PC-9 (cell line): ENCODE measurements at regions of chr2 and their contacts with region 1.

Region 1: GRCh38 chr2:16773080-16773713 is 107.6 kb upstream of the CYRIA start:
- DNase-seq: peak; percentile 42 to 66
- H3K4me3 ChIP-seq: no peak overlapping the region
- H3K27ac ChIP-seq: no peak overlapping the region
- H3K4me1 ChIP-seq: peaks cover 38% of the 10 kb centered on the region
- H3K27me3 ChIP-seq: no peaks in the 10 kb centered on the region
- CTCF ChIP-seq: peak; percentile 88

Region 2: GRCh38 chr2:16911746-16912145 is 138.5 kb after region 1 on chr2:
- CTCF ChIA-PET with region 1: no interaction called
- POLR2A ChIA-PET with region 1: no interaction called
- intact Hi-C with region 1: loop called (anchors 1 kb)
- DNase-seq: no peak
- H3K4me3 ChIP-seq: no peak overlapping the region
- H3K27ac ChIP-seq: no peak overlapping the region
- H3K4me1 ChIP-seq: peaks cover 46% of the 10 kb centered on the region
- H3K27me3 ChIP-seq: no peaks in the 10 kb centered on the region
- CTCF ChIP-seq: no peak

Region 3: GRCh38 chr2:16978301-16978700 is 205.1 kb after region 1 on chr2:
- CTCF ChIA-PET with region 1: no interaction called
- POLR2A ChIA-PET with region 1: no interaction called
- intact Hi-C with region 1: loop called (anchors 10 kb)
- DNase-seq: no peak
- H3K4me3 ChIP-seq: no peak overlapping the region
- H3K27ac ChIP-seq: no peak overlapping the region
- H3K4me1 ChIP-seq: no peaks in the 10 kb centered on the region
- H3K27me3 ChIP-seq: no peaks in the 10 kb centered on the region
- CTCF ChIP-seq: no peak

Region 4: GRCh38 chr2:17148407-17149145 is 375.4 kb after region 1 on chr2:
- CTCF ChIA-PET with region 1: no interaction called
- POLR2A ChIA-PET with region 1: no interaction called
- intact Hi-C with region 1: loop called (anchors 1 kb)
- DNase-seq: no peak
- H3K4me3 ChIP-seq: no peak overlapping the region
- H3K27ac ChIP-seq: no peak overlapping the region
- H3K4me1 ChIP-seq: no peaks in the 10 kb centered on the region
- H3K27me3 ChIP-seq: no peaks in the 10 kb centered on the region
- CTCF ChIP-seq: no peak; the same call in 1 of the 2 replicates

Region 5: GRCh38 chr2:17298453-17298852 is 525.3 kb after region 1 on chr2:
- CTCF ChIA-PET with region 1: no interaction called
- POLR2A ChIA-PET with region 1: no interaction called
- intact Hi-C with region 1: no loop called
- DNase-seq: no peak
- H3K4me3 ChIP-seq: no peak overlapping the region
- H3K27ac ChIP-seq: no peak overlapping the region
- H3K4me1 ChIP-seq: peaks cover 39% of the 10 kb centered on the region
- H3K27me3 ChIP-seq: no peaks in the 10 kb centered on the region
- CTCF ChIP-seq: no peak

Region 6: GRCh38 chr2:17309741-17310339 is 536.6 kb after region 1 on chr2:
- CTCF ChIA-PET with region 1: interaction called, 4 read pairs
- POLR2A ChIA-PET with region 1: no interaction called
- intact Hi-C with region 1: loop called (anchors 1 kb)
- DNase-seq: peak; percentile 31 to 65
- H3K4me3 ChIP-seq: no peak overlapping the region
- H3K27ac ChIP-seq: no peak overlapping the region
- H3K4me1 ChIP-seq: peaks cover 35% of the 10 kb centered on the region
- H3K27me3 ChIP-seq: no peaks in the 10 kb centered on the region
- CTCF ChIP-seq: peak; percentile 90

Region 7: DNA sequence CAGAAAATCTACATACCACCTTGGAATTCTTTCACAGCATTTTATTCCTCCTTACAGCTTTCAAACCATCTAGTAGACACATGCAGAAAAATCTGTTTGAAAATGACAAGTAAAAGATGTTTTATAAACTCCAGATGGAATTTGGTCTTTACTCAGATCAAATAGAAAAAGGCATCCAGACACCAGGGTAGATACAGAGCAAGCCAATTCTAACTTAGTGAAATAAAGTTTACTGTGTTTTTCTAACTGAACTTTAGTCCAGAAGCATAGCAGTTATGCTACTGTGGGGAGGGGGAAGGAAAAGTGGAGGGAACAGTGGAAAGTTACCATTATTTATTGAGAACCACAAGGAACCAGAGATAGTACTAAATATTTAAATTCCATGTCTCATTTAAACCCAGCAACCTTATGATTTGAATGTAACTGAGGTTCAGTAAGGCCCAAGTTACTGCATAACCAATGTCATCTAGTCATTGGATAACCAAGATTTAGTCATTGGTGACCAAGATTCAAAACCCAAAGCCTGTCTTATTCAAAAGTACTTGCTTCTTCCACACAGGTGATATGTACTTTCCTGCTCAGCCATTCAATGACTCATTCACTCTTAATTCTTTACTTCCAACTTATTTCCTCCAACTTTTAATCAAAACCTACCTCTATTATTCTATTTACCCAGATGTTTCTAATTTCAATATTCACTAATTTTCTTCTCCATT is 687.3 kb after region 1 on chr2:
- CTCF ChIA-PET with region 1: no interaction called
- POLR2A ChIA-PET with region 1: no interaction called
- intact Hi-C with region 1: loop called (anchors 10 kb)
- DNase-seq: no peak
- H3K4me3 ChIP-seq: no peak overlapping the region
- H3K27ac ChIP-seq: no peak overlapping the region
- H3K4me1 ChIP-seq: no peaks in the 10 kb centered on the region
- H3K27me3 ChIP-seq: no peaks in the 10 kb centered on the region
- CTCF ChIP-seq: no peak

Region 8: DNA sequence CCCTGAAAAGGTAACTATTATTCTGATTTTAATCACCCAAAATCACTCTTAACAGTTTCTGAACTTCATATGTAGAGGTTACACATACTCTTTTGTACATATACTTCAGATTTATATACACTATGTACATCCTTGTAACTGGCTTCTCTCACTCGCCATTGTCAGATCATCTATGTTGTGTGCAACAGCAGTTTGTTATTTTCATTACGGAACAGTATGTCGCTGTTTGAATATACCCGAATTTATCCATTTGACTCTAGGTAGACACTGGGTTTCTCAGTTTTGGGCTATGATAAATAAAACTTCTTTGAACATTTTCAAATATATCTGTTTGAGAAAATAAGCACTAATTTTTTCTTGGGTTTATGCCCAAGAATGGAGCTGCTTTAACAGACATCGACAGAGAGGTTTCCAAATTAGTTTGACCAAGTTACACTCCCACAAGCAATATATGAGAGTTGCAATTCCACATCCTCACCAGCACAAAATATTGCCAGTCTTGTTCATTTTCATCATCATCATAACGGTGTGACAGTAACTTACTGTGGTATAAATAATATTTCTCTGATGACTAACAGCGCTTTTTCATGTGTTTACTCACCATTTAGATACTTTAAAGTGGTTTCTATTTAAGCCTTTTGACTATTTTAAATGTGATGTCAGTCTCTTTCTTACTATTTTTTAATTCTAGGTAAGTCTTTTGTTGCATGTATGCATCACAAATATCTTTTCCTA is 899.6 kb after region 1 on chr2:
- CTCF ChIA-PET with region 1: no interaction called
- POLR2A ChIA-PET with region 1: no interaction called
- intact Hi-C with region 1: loop called (anchors 2 kb)
- DNase-seq: no peak
- H3K4me3 ChIP-seq: no peak overlapping the region
- H3K27ac ChIP-seq: no peak overlapping the region
- H3K4me1 ChIP-seq: no peaks in the 10 kb centered on the region
- H3K27me3 ChIP-seq: no peaks in the 10 kb centered on the region
- CTCF ChIP-seq: 0 out of 2 replicates have a peak, but pooled peaks have one; percentile 24